AG04450 (cell line): ENCODE measurements at regions of chr3 and their contacts with region 1.

Region 1: DNA sequence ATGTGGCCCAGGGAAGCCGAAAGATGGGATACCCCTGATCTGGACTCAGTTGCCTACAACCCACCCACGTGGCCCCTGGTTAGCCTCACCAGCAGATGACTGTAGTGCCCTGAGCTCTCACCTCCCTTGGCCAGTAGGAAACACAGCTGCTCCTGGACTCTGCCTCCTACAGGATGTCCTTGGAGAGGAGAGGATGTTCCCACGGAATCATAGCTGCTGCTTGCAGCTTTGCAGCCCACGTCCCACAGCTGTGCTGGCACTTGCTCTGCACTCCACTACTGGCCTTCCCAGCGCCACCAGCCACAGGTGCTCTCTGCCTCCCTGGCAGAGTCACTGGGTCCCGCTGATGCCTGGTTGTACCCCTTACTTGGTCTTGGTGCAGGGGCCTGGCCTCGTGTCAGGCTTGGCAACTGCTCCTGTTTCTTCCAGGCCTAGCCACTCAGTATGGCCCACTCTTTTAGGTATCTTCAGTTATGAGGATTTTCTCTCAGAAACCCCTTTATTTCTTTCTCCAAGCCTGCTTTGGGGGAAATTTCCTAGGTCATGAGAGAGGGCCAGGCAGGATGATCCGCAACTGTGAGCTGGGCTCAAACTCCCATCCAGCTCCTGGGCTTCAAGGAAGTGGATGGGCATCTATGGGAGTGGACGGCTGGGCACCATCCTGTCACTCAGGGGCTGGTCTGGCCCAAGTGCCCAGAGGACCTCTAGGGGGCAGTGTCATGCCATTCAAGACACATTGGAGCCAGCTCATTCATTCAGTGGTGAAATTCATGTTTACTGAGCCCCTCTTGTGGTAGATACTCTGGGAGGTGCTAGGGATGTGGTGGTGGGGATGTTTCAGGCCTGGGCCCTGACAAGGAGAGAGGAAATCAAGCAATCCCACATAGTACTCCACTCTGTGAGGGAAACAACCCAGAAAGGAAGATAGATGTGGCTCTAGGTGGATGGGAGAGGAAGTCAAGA is 16.2 kb upstream of the VILL start:
- DNase-seq: no peak
- H3K4me3 ChIP-seq: no peak overlapping the region
- H3K27ac ChIP-seq: no peak overlapping the region
- H3K27me3 ChIP-seq: no peaks in the 10 kb centered on the region
- CTCF ChIP-seq: peak; percentile 73

Region 2: DNA sequence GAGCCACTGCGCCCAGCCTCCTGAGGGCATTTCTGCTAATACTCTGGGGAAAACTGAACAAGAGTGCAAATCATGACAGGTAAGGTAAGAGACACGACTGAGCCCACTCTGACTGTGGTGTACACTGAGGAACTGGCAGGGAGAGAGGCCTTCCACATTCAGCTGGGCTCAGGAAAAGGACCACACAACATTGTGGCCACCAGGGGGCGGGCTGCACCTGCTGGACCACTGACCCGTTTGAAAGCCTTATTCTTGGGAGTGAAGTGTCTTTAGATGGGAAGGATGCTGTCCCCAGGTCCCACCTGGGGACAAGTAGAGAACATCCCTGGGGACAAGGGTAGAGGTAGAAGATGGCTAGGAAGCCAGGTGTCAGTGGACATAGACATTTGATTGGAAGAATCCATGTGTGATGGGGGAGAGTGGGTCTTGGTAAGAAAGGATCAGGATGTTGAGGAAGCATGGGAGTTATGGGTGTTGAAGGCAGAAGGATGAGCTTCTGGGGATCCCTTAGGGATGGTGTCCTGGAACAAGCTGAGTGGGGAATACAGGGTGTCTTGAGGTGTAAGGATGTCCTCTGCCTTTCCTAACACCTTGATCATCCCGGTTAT is 118.9 kb before region 1 on chr3:
- CTCF ChIA-PET with region 1: interaction called, 241 read pairs
- POLR2A ChIA-PET with region 1: no interaction called
- DNase-seq: no peak
- H3K4me3 ChIP-seq: no peak overlapping the region
- H3K27ac ChIP-seq: no peak overlapping the region
- H3K27me3 ChIP-seq: no peaks in the 10 kb centered on the region
- CTCF ChIP-seq: peak; percentile 88

Region 3: DNA sequence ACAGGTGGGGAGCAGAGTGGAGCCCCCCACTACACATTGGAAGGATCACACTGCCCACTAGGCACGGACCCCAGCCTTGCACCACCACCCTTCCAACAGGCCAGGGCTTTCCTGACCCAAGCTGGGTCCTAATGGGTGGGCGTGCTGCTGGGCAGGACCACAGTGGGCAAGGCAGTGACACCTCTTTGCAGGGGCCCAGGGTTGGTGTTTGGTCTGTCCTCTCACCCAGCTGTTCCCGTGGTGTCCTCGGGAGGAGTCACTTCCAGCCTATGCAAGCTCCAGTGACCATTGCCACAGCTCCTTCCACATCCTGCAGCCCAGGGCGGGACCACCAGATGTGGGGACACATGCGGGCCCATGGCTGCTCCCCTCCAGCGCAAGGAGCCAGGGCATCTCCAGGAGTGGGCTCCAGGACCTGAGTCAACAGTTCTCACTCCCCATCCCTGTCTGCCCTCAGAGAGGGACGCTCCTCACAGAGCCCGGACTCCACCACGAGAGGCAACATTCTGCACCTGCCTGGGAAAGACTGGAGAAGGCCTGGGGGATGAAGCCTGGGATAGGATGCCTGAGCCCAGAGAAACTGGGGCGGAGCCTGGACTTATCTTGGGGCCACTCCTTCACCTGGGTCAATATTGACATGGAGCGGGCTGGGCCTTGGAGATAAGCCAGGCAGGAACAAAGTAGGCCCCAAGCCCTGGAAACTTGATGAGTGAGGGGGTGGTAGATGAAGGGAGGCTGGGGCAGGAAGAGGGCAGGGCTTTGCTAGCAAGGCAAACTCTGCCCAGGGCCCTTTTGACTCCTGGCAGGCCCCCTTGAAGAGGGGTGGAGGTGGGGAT is 12.3 kb after region 1 on chr3:
- CTCF ChIA-PET with region 1: interaction called, 15 read pairs
- POLR2A ChIA-PET with region 1: interaction called, 3 read pairs
- DNase-seq: no peak
- H3K4me3 ChIP-seq: no peak overlapping the region
- H3K27ac ChIP-seq: no peak overlapping the region
- H3K27me3 ChIP-seq: peaks cover 1% of the 10 kb centered on the region
- CTCF ChIP-seq: no peak

Region 4: DNA sequence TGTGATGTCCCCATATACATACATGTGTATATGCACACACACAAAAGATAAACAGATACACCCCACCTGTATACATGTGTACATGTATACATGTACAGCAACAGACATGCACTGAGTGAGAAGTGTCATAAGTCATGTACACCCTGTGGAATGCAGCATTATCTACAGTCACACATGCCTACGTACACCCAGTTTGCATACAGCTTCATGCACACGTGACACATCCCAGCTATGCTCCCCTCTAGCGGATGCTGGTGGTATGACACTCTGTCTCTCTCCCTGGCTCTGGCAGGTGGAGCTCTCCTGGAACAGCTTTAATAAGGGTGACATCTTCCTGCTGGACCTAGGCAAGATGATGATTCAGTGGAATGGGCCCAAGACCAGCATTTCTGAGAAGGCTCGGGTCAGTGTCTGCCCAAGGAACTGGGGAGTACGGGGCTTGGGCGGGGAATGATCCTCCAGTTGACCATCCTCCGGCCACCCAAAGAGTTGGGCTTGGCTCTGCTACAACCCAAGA is 22.4 kb after region 1 on chr3:
- CTCF ChIA-PET with region 1: interaction called, 20 read pairs
- POLR2A ChIA-PET with region 1: interaction called, 5 read pairs
- DNase-seq: peak; percentile 55
- H3K4me3 ChIP-seq: no peak overlapping the region
- H3K27ac ChIP-seq: no peak overlapping the region
- H3K27me3 ChIP-seq: peaks cover 1% of the 10 kb centered on the region
- CTCF ChIP-seq: peak; percentile 87

Region 5: GRCh38 chr3:38004415-38005076 is 30.1 kb after region 1 on chr3:
- CTCF ChIA-PET with region 1: interaction called, 10 read pairs
- POLR2A ChIA-PET with region 1: no interaction called
- DNase-seq: no peak
- H3K4me3 ChIP-seq: no peak overlapping the region
- H3K27ac ChIP-seq: no peak overlapping the region
- H3K27me3 ChIP-seq: no peaks in the 10 kb centered on the region
- CTCF ChIP-seq: peak; percentile 78